Activated T-helper 1 cell treated with anti-CD3 and anti-CD28 coated beads, Interleukin-12 subunit alpha, Interleukin-12 subunit beta, Interleukin-2, Interleukin-4 antibody, amounts not matched to agents 30 ng/mL and 10 ng/mL and 1 ng/mL, durations not matched to agents 14 hours and 24 hours and 36 hours (primary cell): ENCODE measurements at regions of chr6 and their contacts with region 1.

Region 1: GRCh38 chr6:159008656-159009288 is 8.8 kb upstream of the RSPH3 start:
- DNase-seq: no peak
- H3K4me3 Mint-ChIP-seq: no peak overlapping the region
- H3K27ac Mint-ChIP-seq: peak overlapping the region; percentile 38
- H3K4me1 Mint-ChIP-seq: peaks cover 14% of the 10 kb centered on the region
- H3K27me3 Mint-ChIP-seq: no peaks in the 10 kb centered on the region

Region 2: GRCh38 chr6:159104163-159104925 is 95.6 kb after region 1 on chr6:
- intact Hi-C with region 1: loop called (anchors 1 kb)
- DNase-seq: peak; percentile 69
- H3K4me3 Mint-ChIP-seq: peak overlapping the region; percentile 67
- H3K27ac Mint-ChIP-seq: peak overlapping the region; percentile 63
- H3K4me1 Mint-ChIP-seq: peaks cover 80% of the 10 kb centered on the region
- H3K27me3 Mint-ChIP-seq: no peaks in the 10 kb centered on the region

Region 3: GRCh38 chr6:159110013-159110412 is 101.2 kb after region 1 on chr6:
- intact Hi-C with region 1: loop called (anchors 1 kb)
- DNase-seq: no peak
- H3K4me3 Mint-ChIP-seq: no peak overlapping the region
- H3K27ac Mint-ChIP-seq: no peak overlapping the region
- H3K4me1 Mint-ChIP-seq: peaks cover 47% of the 10 kb centered on the region
- H3K27me3 Mint-ChIP-seq: peaks cover 4% of the 10 kb centered on the region

Region 4: DNA sequence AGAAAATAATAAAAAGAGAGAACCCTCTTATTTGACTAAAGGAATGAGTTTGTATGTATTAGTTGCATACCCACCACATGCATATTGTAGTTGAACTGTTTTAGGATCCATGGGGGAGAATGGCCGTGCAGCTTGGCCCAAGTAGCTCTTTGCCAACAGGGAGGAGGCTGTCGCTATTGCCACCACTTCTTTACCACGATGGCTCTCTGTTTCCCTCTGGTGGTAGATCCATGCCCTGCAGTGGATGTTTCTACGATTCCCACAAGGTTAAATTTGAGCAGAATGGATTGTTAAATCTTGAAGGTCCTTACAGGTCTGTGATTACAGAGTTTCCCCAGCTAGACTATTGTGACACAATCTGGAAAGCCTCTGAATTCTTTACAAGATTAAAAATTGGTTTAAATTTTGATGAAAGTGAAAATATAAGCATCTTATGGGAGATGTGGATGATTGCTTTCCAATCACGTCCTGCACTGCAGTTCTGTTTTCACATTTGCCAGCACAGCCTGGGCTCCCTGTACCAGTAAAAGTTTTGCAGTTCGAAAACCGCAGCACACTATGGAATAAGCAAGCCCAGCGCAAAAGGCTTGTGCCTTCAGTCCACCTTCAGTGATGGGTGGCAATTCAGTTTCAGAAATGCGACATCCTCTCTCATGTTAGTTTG is 126.1 kb after region 1 on chr6:
- intact Hi-C with region 1: loop called (anchors 1 kb)
- DNase-seq: peak; percentile 67
- H3K4me3 Mint-ChIP-seq: no peak overlapping the region
- H3K27ac Mint-ChIP-seq: no peak overlapping the region
- H3K4me1 Mint-ChIP-seq: peaks cover 10% of the 10 kb centered on the region
- H3K27me3 Mint-ChIP-seq: peaks cover 10% of the 10 kb centered on the region

Region 5: DNA sequence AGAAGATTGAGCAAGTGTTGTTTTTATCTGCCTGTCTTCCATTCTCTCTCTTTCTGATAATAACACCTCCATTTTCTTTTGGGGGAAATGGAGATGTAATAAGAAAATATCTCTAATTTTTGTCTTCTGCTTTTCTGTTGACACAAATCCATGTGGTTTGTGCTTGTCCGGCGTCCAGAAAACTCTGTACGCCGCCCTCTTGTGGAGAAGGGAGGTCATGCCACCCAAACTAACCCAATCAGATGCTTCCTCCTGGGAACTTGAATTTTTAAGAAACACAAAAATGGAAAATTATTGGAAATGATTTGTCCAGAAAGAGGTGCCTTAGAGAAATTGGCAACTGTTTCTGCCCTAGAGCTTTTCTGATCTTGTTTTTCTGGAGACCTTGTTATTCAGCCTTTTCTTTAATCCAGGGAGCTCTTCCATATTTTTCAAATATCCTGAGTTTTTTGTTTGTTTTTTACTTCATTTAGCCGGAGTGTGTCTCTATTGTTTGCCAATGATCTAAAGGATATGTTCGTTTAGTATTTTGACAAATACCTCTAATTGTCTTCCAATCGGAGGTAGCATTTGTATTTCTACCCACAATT is 142.6 kb after region 1 on chr6:
- intact Hi-C with region 1: loop called (anchors 5 kb)
- DNase-seq: no peak
- H3K4me3 Mint-ChIP-seq: no peak overlapping the region
- H3K27ac Mint-ChIP-seq: no peak overlapping the region
- H3K4me1 Mint-ChIP-seq: no peaks in the 10 kb centered on the region
- H3K27me3 Mint-ChIP-seq: peaks cover 23% of the 10 kb centered on the region

Region 6: DNA sequence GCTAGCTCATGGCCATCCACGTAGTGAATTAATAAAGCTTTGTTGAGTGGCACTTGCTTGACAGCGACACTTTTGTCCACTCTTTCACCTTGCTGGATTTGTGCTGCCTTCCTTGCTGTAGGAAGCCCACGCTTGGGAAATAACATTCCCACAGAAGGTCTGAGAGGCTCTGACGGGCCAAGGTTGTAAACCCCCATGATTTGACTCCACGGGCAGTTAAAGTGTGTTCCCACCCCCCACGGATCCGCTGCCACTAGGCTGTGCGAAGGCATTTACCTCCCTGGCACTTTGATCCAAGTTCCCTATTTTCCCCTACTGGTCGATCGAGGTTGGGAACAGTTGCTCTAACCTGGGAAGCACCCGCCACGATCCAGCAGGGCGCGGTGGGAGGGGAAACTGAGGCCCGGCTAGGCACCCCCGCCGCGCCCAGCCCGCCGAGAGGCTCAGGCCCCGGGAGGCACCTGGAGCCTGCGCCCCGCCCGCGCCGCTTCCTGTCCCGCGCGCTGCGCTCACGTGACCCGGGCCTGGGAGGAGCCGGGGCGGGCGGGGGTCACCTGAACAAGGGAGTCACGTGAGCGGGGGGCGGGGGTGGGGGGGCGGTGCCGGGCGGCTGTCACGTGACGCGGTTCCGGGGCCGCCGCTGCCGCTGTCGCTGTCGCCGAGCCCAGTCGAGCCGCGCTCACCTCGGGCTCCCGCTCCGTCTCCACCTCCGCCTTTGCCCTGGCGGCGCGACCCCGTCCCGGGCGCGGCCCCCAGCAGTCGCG is 959.9 kb after region 1 on chr6 and contains the start of gene IGF2R:
- intact Hi-C with region 1: loop called (anchors 10 kb)
- DNase-seq: peak; percentile 90
- H3K4me3 Mint-ChIP-seq: peak within 1 kb of the TSS; percentile 96
- H3K27ac Mint-ChIP-seq: peak within 1 kb of the TSS; percentile 93
- H3K4me1 Mint-ChIP-seq: peaks cover 34% of the 10 kb centered on the region
- H3K27me3 Mint-ChIP-seq: peaks cover 17% of the 10 kb centered on the region
- total RNA-seq, gene IGF2R: 118 and 126 TPM in 2 replicates